Heart right ventricle (tissue), 16 donors: ENCODE measurements at regions of chr3 and their contacts with region 1.

Region 1: DNA sequence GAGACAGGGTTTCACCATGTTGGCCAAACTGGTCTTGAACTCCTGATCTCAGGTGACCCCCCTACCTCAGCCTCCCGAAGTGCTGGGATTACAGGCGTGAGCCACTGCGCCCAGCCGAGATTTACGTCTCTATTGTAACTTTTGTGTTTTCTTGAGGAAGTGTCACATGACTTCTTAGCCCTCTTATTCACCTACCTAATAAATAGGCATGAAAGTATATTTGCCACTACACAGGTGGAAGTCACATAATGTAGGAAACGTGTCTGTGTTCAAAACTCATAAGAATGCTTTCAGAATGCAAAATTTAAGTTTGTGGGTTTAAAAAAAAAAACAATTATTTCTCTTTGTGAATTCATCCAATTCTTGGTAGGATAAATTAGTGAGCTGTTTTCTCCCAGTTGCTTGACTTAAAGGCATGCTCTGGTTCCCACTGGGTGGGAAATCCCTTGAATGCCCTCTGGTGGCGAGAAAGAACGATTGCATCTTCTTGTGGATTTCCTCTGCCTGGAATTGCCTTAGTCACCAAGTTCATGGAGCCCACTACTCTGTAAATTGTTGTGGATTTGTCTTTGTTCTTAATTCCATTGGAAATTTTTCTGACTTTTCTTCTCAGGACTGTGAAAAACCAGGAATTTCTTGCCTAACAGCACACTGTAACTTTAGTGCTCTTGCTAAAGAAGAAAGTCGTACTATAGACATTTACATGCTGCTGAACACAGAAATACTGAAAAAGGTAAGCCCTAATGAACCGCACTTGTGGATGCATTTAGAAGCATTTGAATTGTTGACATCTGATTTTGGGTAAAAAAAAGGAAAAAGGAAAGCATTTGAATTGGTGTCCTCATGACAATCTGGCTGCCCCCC is 82.2 kb upstream of the CTDSPL start:
- DNase-seq: peak in 1 of 2 donors; percentile 58
- ATAC-seq: peak; percentile 54 to 88 (median 82)
- H3K4me3 ChIP-seq: no peak overlapping the region
- H3K27ac ChIP-seq: peak overlapping the region in 3 of 10 donors; percentile 12 to 15 (median 13)
- H3K4me1 ChIP-seq: peaks cover 0 to 45% (median 4%) of the 10 kb centered on the region in 9 donors
- H3K27me3 ChIP-seq: no peaks in the 10 kb centered on the region
- CTCF ChIP-seq: peak; percentile 78 to 92 (median 86)

Region 2: GRCh38 chr3:37461485-37462000 is 318.0 kb before region 1 on chr3:
- intact Hi-C with region 1: loop called in 1 of 10 experiments (anchors 5 kb)
- DNase-seq: no peak
- ATAC-seq: no peak
- H3K4me3 ChIP-seq: no peak overlapping the region
- H3K27ac ChIP-seq: no peak overlapping the region
- H3K4me1 ChIP-seq: peaks cover 31 to 84% (median 47%) of the 10 kb centered on the region in 9 donors
- H3K27me3 ChIP-seq: no peaks in the 10 kb centered on the region
- CTCF ChIP-seq: no peak

Region 3: GRCh38 chr3:37537914-37538691 is 241.4 kb before region 1 on chr3:
- intact Hi-C with region 1: loop called in 1 of 10 experiments (anchors 10 kb)
- DNase-seq: peak in 1 of 2 donors; percentile 24
- ATAC-seq: peak; percentile 26 to 69 (median 51)
- H3K4me3 ChIP-seq: no peak overlapping the region
- H3K27ac ChIP-seq: peak overlapping the region in 8 of 10 donors; percentile 8 to 77 (median 48)
- H3K4me1 ChIP-seq: peaks cover 9 to 85% (median 50%) of the 10 kb centered on the region in 9 donors
- H3K27me3 ChIP-seq: no peaks in the 10 kb centered on the region
- CTCF ChIP-seq: no peak

Region 4: GRCh38 chr3:37819591-37819990 is 40.1 kb after region 1 on chr3:
- intact Hi-C with region 1: loop called in 1 of 10 experiments (anchors 5 kb)
- DNase-seq: peak in 1 of 2 donors; percentile 69
- ATAC-seq: peak in 7 of 8 donors; percentile 64 to 87 (median 75)
- H3K4me3 ChIP-seq: no peak overlapping the region
- H3K27ac ChIP-seq: peak overlapping the region in 8 of 10 donors; percentile 39 to 80 (median 63)
- H3K4me1 ChIP-seq: peaks cover 4 to 50% (median 26%) of the 10 kb centered on the region in 9 donors
- H3K27me3 ChIP-seq: no peaks in the 10 kb centered on the region
- CTCF ChIP-seq: no peak

Region 5: GRCh38 chr3:38136777-38137614 is 357.5 kb after region 1 on chr3 and contains the start of gene ACAA1:
- intact Hi-C with region 1: no loop called
- DNase-seq: peak; percentile 99 to 100
- ATAC-seq: peak; percentile 96 to 98 (median 98)
- H3K4me3 ChIP-seq: peak within 1 kb of the TSS; percentile 63 to 100 (median 94)
- H3K27ac ChIP-seq: peak within 1 kb of the TSS; percentile 86 to 97 (median 94)
- H3K4me1 ChIP-seq: peaks cover 8 to 58% (median 42%) of the 10 kb centered on the region in 9 donors
- H3K27me3 ChIP-seq: no peaks in the 10 kb centered on the region
- CTCF ChIP-seq: peak in 3 of 9 donors; percentile 3 to 20 (median 9)
- total RNA-seq, gene ACAA1: 102 to 136 (median 117) TPM